ENCODE measurements at regions of chr16 and their contacts with region 1.

Region 1: DNA sequence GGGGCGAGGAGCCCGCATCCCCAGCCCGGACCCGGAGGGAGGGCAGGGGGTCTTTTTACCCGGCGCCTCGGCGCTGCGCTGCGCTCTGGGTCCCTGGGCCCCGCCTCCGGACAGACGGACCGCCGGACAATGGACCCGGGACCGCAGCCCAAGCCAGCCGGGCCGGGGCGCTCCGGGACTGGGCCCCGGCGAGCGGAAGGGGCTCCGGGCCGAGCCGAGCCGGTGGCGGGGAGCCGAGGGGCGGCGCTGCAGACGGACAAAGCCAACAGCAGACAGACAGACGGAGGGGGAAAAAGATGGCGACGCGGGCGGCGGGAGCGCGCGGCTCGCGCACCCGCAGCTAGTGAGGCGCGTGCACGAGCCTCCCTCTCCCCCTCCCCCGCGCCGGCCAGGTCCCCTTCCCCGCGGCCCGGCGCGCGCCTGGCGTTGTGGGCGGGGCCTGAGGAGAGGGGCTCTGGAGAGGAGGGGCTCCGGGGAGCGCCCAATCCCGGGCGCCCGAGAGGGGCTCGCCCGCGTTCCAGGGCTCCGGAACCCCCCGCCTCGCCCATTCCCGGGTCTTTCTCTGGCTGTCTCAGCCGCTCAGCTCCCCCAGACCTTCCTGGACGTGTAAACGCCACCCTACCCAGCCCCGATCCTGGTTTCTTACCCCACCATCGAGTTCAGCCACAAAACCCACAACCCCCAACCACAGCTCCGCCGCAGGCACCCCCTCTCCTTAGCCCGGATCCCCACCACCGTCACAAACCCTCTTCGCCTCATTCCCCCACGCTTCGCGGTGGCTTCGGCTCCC is at the start of gene ZNF821:
- DNase-seq: peak; percentile 91
- H3K4me3 ChIP-seq: peak within 1 kb of the TSS; percentile 95
- H3K27ac ChIP-seq: peak within 1 kb of the TSS; percentile 63
- H3K4me1 ChIP-seq: peaks cover 44% of the 10 kb centered on the region
- CTCF ChIP-seq: peak; percentile 77
- total RNA-seq, gene ZNF821: 10.5 and 14.6 TPM in 2 replicates

Region 2: DNA sequence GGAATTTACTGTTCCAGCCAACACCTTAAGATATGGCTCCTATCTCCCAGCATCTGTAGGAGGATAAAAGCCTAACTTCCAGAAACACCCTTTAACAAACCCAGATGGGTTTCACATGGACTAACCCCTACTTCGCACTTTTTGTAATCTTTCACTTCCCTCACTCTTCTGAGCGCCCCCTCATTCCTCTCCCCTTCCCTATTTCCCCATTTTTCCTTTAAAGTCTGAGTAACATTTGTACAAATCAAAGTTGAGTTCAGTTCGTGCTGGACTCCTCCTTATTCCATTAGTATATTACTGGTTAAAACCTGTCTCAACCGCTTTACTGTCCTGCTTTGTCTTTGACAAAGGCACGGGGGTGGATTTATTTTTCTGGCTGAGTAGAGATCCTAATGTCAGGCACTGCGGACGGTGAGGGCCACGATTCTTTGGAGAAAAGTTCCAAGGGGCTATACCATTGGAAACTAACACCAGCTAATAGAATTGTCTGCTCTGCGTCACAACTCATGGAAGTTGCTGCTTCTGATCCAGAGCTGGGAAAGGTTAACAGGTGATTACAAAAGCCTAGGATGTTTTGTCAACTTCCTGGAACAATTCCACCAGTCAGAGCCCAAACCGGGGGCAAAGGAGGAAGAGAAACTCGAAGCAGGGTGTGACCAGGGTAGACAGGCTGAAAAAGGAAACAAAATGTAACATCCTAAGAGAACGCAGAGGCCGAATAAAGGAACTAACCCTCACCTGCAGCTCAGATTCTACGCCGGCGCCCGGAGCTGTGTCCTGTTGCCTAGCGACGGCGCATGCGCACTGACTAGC is 319.7 kb before region 1 on chr16:
- CTCF ChIA-PET with region 1: no interaction called
- POLR2A ChIA-PET with region 1: no interaction called
- intact Hi-C with region 1: loop called (anchors 10 kb)
- DNase-seq: no peak
- H3K4me3 ChIP-seq: peak overlapping the region; percentile 67
- H3K27ac ChIP-seq: peak overlapping the region; percentile 97
- H3K4me1 ChIP-seq: peaks cover 29% of the 10 kb centered on the region
- CTCF ChIP-seq: no peak

Region 3: DNA sequence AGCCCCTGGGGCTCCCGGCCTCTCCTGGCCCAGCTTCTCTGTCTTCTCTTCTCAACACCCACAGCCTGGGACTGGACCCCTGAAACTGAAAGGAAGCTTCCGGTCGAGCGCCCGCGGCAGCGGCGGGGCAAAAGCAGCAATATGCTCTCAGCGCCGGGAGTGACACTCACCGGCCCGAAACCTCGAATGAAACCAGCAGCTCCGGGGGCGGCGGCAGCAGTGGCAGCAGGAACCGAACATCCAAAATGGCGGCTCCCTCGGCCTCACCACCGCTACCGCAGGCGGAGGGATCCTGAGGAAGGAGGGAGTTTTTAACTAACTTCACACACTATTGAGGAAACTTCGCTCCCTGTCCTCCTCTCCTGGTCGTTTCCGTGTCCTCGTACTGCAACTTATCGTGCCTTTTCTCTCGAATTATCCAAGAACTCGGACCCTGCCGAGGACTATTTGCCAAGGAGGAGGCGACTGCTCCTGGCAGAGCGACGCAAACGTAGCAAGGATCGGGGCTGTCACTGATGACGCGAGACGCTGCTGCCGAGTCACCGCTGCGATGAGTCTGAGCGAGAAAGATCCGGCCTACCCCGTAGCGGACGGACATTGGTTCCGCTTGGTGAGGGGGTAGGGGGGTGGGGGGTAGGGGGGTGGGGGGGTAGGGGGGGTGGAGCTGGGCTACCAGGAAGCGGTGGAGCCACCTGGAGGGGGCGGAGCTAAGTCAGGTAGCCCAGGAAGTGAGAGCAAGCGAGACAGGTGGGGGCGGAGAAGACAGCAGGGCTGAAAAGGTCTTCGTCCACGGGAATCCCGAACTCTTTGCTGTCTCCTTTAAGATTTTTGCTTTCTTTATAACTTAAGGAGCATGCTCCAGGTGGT is 75.2 kb before region 1 on chr16 and contains the start of gene AP1G1:
- CTCF ChIA-PET with region 1: no interaction called
- POLR2A ChIA-PET with region 1: interaction called, 7 read pairs
- intact Hi-C with region 1: loop called (anchors 2 kb)
- DNase-seq: peak; percentile 99
- H3K4me3 ChIP-seq: peak within 1 kb of the TSS; percentile 98
- H3K27ac ChIP-seq: peak within 1 kb of the TSS; percentile 85
- H3K4me1 ChIP-seq: peaks cover 23% of the 10 kb centered on the region
- CTCF ChIP-seq: no peak
- total RNA-seq, gene AP1G1: 57.3 and 57.9 TPM in 2 replicates

Region 4: GRCh38 chr16:71894921-71895678 is 11.1 kb after region 1 on chr16 and contains the start of gene IST1:
- CTCF ChIA-PET with region 1: interaction called, 6 read pairs
- POLR2A ChIA-PET with region 1: interaction called, 19 read pairs
- intact Hi-C with region 1: loop called (anchors 1 kb)
- DNase-seq: peak; percentile 99
- H3K4me3 ChIP-seq: peak within 1 kb of the TSS; percentile 95
- H3K27ac ChIP-seq: peak within 1 kb of the TSS; percentile 73
- H3K4me1 ChIP-seq: peaks cover 30% of the 10 kb centered on the region
- CTCF ChIP-seq: no peak
- total RNA-seq, gene IST1: 147 and 152 TPM in 2 replicates

Region 5: GRCh38 chr16:72093448-72094265 is 209.6 kb after region 1 on chr16 and contains the starts of genes DHX38 and TXNL4B:
- CTCF ChIA-PET with region 1: no interaction called
- POLR2A ChIA-PET with region 1: no interaction called
- intact Hi-C with region 1: loop called (anchors 10 kb)
- DNase-seq: peak; percentile 98
- H3K4me3 ChIP-seq: peak within 1 kb of the TSS; percentile 96
- H3K27ac ChIP-seq: peak within 1 kb of the TSS; percentile 64
- H3K4me1 ChIP-seq: peaks cover 29% of the 10 kb centered on the region
- CTCF ChIP-seq: no peak
- total RNA-seq, gene DHX38: 56.6 and 71.9 TPM in 2 replicates
- total RNA-seq, gene TXNL4B: 7.9 and 9.5 TPM in 2 replicates